B cell (primary cell): ENCODE measurements at regions of chr6 and their contacts with region 1.

Region 1: DNA sequence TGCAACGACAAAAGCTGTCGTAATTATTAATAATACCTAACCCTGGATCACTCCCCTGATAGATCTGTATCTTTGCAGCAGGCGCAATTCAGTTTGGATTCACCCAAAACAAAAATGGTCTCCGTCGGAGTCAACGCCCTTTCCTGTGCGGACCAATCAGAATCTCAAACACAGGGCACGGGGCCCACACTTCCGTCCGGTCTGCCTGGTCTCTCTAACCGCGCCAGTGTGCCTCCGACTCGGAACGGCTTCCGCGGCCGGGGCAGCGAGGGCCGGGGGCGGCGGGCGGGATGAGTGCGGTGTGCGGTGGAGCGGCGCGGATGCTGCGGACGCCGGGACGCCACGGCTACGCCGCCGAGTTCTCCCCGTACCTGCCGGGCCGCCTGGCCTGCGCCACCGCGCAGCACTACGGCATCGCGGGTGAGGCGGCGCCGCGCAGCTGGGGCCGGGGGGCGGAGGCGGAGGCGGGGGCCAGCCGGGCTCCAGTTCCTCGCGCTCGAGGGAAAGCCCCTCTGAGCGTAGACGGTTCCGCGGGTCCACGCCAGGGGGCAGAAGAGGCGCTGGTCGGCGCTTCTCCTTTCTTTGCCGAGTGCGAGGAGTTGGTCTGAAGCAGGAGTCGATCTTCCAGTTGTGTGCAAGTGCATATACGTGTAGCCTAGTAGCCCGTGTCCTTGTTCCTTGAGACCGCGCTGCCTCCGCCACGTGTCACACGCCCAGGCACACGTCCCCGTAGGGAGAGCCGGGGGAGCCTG is at the start of gene PEX7:
- DNase-seq: peak; percentile 94
- ATAC-seq: peak; percentile 91
- H3K4me3 ChIP-seq: peak within 1 kb of the TSS; percentile 45 to 87 (median 71)
- H3K4me3 Mint-ChIP-seq: peak within 1 kb of the TSS; percentile 90
- H3K27ac ChIP-seq: peak within 1 kb of the TSS; percentile 65 to 95
- H3K27ac Mint-ChIP-seq: peak within 1 kb of the TSS; percentile 91
- H3K4me1 ChIP-seq: peaks cover 11 to 12% of the 10 kb centered on the region in 2 donors
- H3K4me1 Mint-ChIP-seq: peaks cover 18% of the 10 kb centered on the region
- H3K27me3 ChIP-seq: peaks cover 0 to 3% (median 0%) of the 10 kb centered on the region in 4 experiments
- H3K27me3 Mint-ChIP-seq: peaks cover 9% of the 10 kb centered on the region
- CTCF ChIP-seq: peak; percentile 82
- total RNA-seq, gene PEX7: 3.9 and 6.6 TPM in 2 replicates

Region 2: GRCh38 chr6:136927292-136927691 is 104.7 kb after region 1 on chr6:
- CTCF ChIA-PET with region 1: no interaction called
- POLR2A ChIA-PET with region 1: no interaction called
- intact Hi-C with region 1: loop called (anchors 10 kb)
- DNase-seq: peak; percentile 22
- ATAC-seq: peak; percentile 33
- H3K4me3 ChIP-seq: no peak overlapping the region
- H3K4me3 Mint-ChIP-seq: no peak overlapping the region
- H3K27ac ChIP-seq: no peak overlapping the region
- H3K27ac Mint-ChIP-seq: no peak overlapping the region
- H3K4me1 ChIP-seq: peaks cover 17 to 18% of the 10 kb centered on the region in 2 donors
- H3K4me1 Mint-ChIP-seq: peaks cover 15% of the 10 kb centered on the region
- H3K27me3 ChIP-seq: peaks cover 0 to 36% (median 20%) of the 10 kb centered on the region in 4 experiments
- H3K27me3 Mint-ChIP-seq: peaks cover 33% of the 10 kb centered on the region
- CTCF ChIP-seq: peak; percentile 11

Region 3: GRCh38 chr6:136967876-136968752 is 145.6 kb after region 1 on chr6:
- CTCF ChIA-PET with region 1: no interaction called
- POLR2A ChIA-PET with region 1: no interaction called
- intact Hi-C with region 1: loop called (anchors 1 kb)
- DNase-seq: peak; percentile 77
- ATAC-seq: peak; percentile 85
- H3K4me3 ChIP-seq: no peak overlapping the region
- H3K4me3 Mint-ChIP-seq: no peak overlapping the region
- H3K27ac ChIP-seq: no peak overlapping the region
- H3K27ac Mint-ChIP-seq: no peak overlapping the region
- H3K4me1 ChIP-seq: peaks cover 3% of the 10 kb centered on the region in 2 donors
- H3K4me1 Mint-ChIP-seq: peaks cover 7% of the 10 kb centered on the region
- H3K27me3 ChIP-seq: peaks cover 0 to 9% (median 0%) of the 10 kb centered on the region in 4 experiments
- H3K27me3 Mint-ChIP-seq: peaks cover 24% of the 10 kb centered on the region
- CTCF ChIP-seq: peak; percentile 82

Region 4: DNA sequence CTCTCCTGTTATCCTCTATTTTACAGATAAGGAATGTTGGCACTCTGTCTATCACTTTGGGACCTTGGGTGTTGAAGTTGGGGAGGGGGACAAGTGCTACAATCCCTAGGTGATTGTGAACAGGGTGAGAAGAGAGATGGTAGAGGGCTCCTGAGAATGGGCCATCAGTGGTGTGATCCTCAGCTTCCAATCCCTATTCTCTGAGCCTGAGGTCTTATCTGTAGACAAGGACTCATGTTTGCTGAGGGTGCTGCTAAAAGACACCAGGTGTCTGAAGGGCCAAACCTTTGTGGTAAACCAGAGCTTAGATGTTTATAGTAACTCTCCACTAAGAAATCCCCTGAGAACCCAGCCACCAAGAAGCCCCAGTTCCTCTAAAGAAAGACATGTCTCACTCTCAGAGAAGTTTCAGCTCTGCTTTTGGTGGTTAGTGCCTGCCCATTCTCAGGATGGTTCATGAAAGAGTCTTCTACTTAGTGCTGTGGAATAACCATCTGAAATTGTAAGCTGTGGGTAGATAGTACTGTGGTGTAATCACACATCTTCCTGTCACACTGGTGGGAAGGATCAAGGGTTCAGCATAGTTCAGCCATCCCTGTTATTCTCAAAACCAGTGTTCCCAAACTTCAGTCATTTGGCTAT is 280.4 kb after region 1 on chr6:
- CTCF ChIA-PET with region 1: no interaction called
- POLR2A ChIA-PET with region 1: no interaction called
- intact Hi-C with region 1: loop called (anchors 10 kb)
- DNase-seq: peak; percentile 92
- ATAC-seq: peak; percentile 81
- H3K4me3 ChIP-seq: peak overlapping the region in 4 of 5 experiments; percentile 8 to 49 (median 16)
- H3K4me3 Mint-ChIP-seq: peak overlapping the region; percentile 86
- H3K27ac ChIP-seq: peak overlapping the region; percentile 97
- H3K27ac Mint-ChIP-seq: peak overlapping the region; percentile 99
- H3K4me1 ChIP-seq: peaks cover 89 to 91% of the 10 kb centered on the region in 2 donors
- H3K4me1 Mint-ChIP-seq: peaks cover 87% of the 10 kb centered on the region
- H3K27me3 ChIP-seq: no peaks in the 10 kb centered on the region
- H3K27me3 Mint-ChIP-seq: no peaks in the 10 kb centered on the region
- CTCF ChIP-seq: no peak